HepG2 (cell line): ENCODE measurements at regions of chr5 and their contacts with region 1.

Region 1: GRCh38 chr5:174222891-174223290 is 177.4 kb downstream of the NSG2 start:
- DNase-seq: no peak
- ATAC-seq: no peak
- H3K4me3 ChIP-seq: no peak overlapping the region
- H3K27ac ChIP-seq: no peak overlapping the region
- H3K4me1 ChIP-seq: no peaks in the 10 kb centered on the region
- H3K27me3 ChIP-seq: peaks cover 1 to 7% of the 10 kb centered on the region in 2 experiments; a peak in 2 of 5 replicates
- CTCF ChIP-seq: no peak
- EP300 ChIP-seq: no peak
- POLR2A ChIP-seq: no peak
- RAD21 ChIP-seq: no peak

Region 2: DNA sequence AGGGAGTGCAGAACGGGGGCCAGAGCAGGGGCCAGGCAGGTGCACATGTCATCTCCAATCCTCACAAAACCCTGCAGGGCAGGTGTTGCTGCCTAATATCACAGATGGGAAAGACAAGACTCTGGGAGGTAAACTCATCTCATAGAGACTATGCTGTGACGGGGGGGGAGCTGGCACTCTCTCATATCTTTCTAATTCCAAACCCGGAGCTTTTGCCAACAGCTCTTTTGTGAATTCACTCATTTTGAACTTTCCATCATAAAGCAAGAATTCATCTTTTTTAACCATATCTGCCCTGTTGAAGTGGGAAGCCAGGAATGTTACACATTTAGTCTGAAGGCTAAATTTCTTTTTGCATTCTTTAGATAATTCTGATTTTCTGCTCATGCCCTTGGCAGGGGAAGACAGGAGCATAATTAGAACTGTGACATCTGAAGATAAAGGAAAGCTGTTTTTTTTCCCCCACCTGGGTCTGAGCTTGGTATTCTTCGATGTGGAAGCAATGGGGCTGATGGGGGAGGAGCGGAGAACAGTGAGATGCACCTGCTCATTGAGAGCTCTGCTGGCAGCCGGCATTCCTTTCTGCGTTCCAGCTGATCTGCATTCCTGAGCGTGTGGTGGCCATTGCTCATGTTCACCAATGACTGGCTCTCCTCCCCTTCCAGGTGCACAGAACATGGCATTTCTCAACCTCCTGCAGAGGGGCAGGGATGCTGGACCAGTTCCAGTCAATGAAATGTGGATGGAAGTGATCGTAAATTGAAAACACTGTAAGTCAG is 18.2 kb before region 1 on chr5:
- CTCF ChIA-PET with region 1: no interaction called
- POLR2A ChIA-PET with region 1: no interaction called
- in situ Hi-C with region 1: no loop called
- intact Hi-C with region 1: loop called (anchors 1 kb)
- DNase-seq: no peak
- ATAC-seq: no peak
- H3K4me3 ChIP-seq: no peak overlapping the region
- H3K27ac ChIP-seq: no peak overlapping the region
- H3K4me1 ChIP-seq: no peaks in the 10 kb centered on the region
- H3K27me3 ChIP-seq: no peaks in the 10 kb centered on the region; a peak in 1 of 5 replicates
- CTCF ChIP-seq: no peak
- EP300 ChIP-seq: no peak
- POLR2A ChIP-seq: no peak
- RAD21 ChIP-seq: no peak